HCT116 (cell line): ENCODE measurements at regions of chr1 and their contacts with region 1.

Region 1: DNA sequence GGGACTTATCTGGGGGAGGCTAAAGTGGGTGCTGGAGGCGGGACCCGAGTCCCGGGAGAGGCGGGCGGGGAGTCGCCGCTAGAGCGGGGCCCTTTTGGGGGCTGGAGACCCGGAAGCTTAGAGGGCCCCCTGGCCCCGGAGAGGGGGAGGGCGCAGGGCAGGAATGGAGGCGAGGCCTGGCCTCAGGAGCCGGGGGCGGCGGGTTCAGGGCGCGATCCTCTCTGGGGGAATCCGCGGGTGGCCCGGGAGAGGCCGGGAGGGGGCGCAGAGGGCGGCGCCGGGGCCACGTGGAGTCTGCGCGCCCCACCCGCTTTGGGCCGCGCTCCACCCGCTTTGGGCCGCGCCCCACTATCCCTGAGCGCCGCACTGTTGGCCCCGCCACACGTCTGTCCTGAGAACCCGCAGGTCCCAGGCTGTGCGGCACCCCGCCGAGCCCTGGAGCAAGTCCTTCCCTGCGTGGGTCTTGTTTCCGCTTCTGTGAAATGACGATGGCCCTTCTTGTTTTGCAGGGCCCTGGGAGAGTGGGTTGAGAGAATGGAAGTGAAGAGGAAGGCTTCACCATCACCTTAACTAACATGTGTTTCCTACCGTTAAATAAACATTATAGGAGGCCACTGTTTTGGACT is 84.4 kb downstream of the NKAIN1 start:
- DNase-seq: no peak
- ATAC-seq: peak; percentile 86
- H3K4me3 ChIP-seq: peak overlapping the region; percentile 58 to 62
- H3K27ac ChIP-seq: peak overlapping the region; percentile 88
- H3K4me1 ChIP-seq: peaks cover 9 to 21% of the 10 kb centered on the region in 2 experiments
- H3K27me3 ChIP-seq: no peaks in the 10 kb centered on the region
- CTCF ChIP-seq: peak in 2 of 3 experiments; percentile 24 to 27; a peak in 1 of 6 replicates
- POLR2A ChIP-seq: no peak
- RAD21 ChIP-seq: no peak

Region 2: GRCh38 chr1:31065310-31066217 is 89.8 kb before region 1 on chr1 and contains the start of gene PUM1:
- CTCF ChIA-PET with region 1: no interaction called
- POLR2A ChIA-PET with region 1: no interaction called
- RAD21 ChIA-PET with region 1: no interaction called
- intact Hi-C with region 1: loop called (anchors 10 kb)
- DNase-seq: peak; percentile 96
- ATAC-seq: peak; percentile 95
- H3K4me3 ChIP-seq: peak within 1 kb of the TSS; percentile 94 to 97
- H3K27ac ChIP-seq: peak within 1 kb of the TSS; percentile 72
- H3K4me1 ChIP-seq: peaks cover 17 to 38% of the 10 kb centered on the region in 2 experiments
- H3K27me3 ChIP-seq: no peaks in the 10 kb centered on the region
- CTCF ChIP-seq: no peak
- POLR2A ChIP-seq: peak; percentile 66
- RAD21 ChIP-seq: no peak
- total RNA-seq, gene PUM1: 113 TPM